ENCODE measurements at regions of chr17 and their contacts with region 1.

Region 1: DNA sequence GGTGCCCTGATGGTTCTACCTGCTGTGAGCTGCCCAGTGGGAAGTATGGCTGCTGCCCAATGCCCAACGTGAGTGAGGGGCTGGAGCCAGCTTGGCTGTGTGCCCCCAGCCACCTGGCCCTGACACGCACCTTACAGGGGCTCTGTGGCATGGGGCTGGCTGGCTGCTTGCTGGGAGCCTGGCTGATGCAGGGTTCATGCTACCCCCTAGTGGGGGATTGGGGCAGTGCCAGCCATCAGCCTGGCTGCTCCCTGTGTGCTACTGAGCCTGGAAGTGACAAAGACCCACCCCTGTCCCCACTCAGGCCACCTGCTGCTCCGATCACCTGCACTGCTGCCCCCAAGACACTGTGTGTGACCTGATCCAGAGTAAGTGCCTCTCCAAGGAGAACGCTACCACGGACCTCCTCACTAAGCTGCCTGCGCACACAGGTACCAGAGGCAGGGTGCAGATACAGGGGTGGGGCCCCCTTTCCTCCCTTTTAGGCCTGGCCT is 5.7 kb downstream of the GRN start:
- DNase-seq: peak; percentile 84
- H3K4me3 ChIP-seq: no peak overlapping the region
- H3K27ac ChIP-seq: no peak overlapping the region
- H3K4me1 ChIP-seq: peaks cover 62% of the 10 kb centered on the region
- CTCF ChIP-seq: peak; percentile 87

Region 2: DNA sequence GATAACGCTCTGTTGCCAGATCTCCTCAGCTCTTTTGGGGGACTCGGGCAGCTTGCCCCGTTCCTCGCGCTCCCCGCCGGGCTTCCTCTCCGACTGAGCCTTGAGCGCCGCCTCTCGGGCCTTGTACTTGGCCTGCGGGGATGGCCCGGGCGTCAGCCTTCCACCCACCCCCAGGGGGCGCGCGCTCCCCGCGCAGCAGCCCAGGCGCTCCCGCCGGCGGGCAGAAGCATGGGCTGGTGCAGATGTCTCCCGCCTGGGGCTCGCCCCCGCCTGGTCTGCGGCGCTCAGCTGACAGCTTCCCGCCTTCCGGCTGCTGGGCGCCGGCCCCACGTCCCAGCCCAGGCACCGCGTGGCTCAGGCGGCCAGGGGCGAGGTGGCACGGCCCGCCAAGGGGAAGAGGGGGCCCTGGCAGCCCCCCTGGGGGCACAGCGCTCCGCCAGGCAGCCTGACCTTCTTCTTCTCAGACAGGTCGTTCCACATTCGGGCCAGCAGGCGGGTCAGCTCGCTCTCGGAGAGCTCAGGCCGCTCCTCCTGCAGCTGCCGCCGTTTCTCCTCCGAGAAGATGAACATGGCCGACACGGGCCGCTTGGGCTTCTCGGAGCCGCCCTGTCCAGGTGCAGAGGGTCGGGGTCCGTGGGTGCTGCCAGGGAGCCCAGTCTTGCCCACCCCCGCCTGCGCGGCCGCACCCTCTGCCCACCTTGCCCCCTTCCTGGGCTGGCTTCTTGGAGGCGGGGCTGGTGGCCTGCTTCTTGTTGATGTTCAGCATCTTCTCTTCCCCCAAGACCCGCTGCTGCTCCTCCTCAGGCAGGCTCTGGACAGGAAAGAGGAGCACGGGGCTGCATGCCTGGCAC is 140.2 kb before region 1 on chr17:
- CTCF ChIA-PET with region 1: interaction called, 4 read pairs
- POLR2A ChIA-PET with region 1: interaction called, 4 read pairs
- intact Hi-C with region 1: loop called (anchors 2 kb)
- DNase-seq: peak; percentile 94
- H3K4me3 ChIP-seq: peak overlapping the region; percentile 52
- H3K27ac ChIP-seq: peak overlapping the region; percentile 76
- H3K4me1 ChIP-seq: peaks cover 37% of the 10 kb centered on the region
- CTCF ChIP-seq: peak; percentile 94

Region 3: DNA sequence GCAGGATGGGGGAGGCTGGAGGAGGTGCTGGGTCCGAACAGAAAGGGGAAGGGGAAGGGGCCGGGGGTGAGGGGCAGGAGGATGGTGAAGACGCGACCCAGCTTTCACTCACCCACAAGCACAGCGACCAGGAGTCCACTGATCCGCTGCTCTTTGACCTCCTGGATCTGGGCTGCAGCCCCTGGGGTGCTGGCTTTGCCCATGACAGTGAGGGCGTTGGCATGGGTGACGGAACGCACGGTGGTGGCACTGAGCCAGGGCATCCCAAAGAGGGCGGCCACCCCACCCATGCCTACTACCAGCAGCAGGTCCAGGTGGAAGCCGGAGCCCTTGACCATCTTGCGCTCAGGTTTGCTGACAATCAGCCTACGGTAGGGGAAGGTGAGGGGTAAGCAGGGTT is 97.8 kb before region 1 on chr17:
- CTCF ChIA-PET with region 1: no interaction called
- POLR2A ChIA-PET with region 1: no interaction called
- intact Hi-C with region 1: no loop called
- DNase-seq: no peak
- H3K4me3 ChIP-seq: no peak overlapping the region
- H3K27ac ChIP-seq: no peak overlapping the region
- H3K4me1 ChIP-seq: peaks cover 11% of the 10 kb centered on the region
- CTCF ChIP-seq: no peak

Region 4: DNA sequence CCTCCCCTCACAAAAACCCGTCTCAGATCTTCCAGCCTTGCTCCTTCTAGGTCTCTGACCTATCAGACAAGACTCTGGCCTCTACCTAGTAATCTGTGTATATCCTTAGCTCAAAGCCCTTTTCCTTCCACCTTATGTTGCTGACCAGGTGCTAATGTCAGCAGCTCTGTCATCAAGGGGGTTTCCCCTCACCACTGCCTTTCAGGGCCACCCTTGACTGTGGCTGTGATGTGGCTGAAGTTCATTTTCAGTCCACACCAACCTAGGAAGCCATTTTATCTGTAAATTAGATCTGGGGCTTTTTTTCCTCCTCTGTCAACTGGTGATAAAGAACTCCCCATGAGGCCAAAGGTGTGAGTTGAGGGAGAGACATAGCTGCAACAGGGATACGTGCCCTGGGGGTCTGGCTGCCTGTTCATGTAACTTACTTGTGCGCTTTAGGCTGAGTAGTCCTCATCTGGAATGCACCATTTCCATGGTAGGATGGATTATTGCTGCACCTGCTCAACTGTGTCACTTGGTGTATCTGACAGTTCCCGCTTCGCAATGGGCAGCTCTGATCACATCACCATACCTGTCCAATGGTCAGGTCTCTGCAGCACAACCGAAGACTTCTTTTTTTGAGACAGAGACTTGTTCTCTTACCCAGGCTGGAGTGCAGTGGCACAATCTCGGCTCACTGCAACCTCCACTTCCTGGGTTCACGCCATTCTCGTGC is 57.1 kb before region 1 on chr17:
- CTCF ChIA-PET with region 1: no interaction called
- POLR2A ChIA-PET with region 1: no interaction called
- intact Hi-C with region 1: no loop called
- DNase-seq: no peak
- H3K4me3 ChIP-seq: no peak overlapping the region
- H3K27ac ChIP-seq: no peak overlapping the region
- H3K4me1 ChIP-seq: no peaks in the 10 kb centered on the region
- CTCF ChIP-seq: no peak

Measured in OCI-LY7 (cell line).